ENCODE measurements at regions of chr17 and their contacts with region 1.

Region 1: GRCh38 chr17:41296846-41297245 is 5.8 kb downstream of the KRTAP29-1 start:
- DNase-seq: peak; percentile 23
- H3K4me3 Mint-ChIP-seq: no peak overlapping the region
- H3K27ac Mint-ChIP-seq: no peak overlapping the region
- H3K4me1 Mint-ChIP-seq: no peaks in the 10 kb centered on the region
- H3K27me3 Mint-ChIP-seq: peaks cover 2% of the 10 kb centered on the region

Region 2: GRCh38 chr17:41065829-41066624 is 230.8 kb before region 1 on chr17 and contains the start of gene KRTAP2-4:
- intact Hi-C with region 1: no loop called
- DNase-seq: no peak
- H3K4me3 Mint-ChIP-seq: no peak within 1 kb of the TSS
- H3K27ac Mint-ChIP-seq: no peak within 1 kb of the TSS
- H3K4me1 Mint-ChIP-seq: no peaks in the 10 kb centered on the region
- H3K27me3 Mint-ChIP-seq: peaks cover 7% of the 10 kb centered on the region
- total RNA-seq, gene KRTAP2-4: not detected in 2 replicates

Region 3: DNA sequence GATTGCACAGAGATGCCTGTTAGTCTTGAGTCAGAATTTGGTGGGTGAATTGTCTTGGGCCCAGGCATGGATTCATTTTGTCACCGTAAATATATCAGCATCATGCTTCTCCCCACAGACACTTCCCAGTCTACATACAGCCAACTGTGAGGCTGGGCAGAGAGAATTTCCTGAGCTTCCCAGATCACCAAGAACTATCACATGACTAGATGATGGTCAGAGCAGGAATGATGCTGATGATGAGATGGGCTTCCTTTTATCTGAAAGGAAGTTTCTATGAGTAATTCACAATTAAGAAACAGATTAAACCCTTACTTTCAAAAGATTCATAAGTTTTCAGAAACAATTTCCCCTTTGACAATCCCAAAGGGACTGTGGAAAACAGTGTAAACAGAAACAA is 42.0 kb before region 1 on chr17:
- intact Hi-C with region 1: loop called (anchors 5 kb)
- DNase-seq: peak; percentile 40
- H3K4me3 Mint-ChIP-seq: no peak overlapping the region
- H3K27ac Mint-ChIP-seq: no peak overlapping the region
- H3K4me1 Mint-ChIP-seq: no peaks in the 10 kb centered on the region
- H3K27me3 Mint-ChIP-seq: peaks cover 34% of the 10 kb centered on the region

Region 4: GRCh38 chr17:41338961-41339485 is 42.2 kb after region 1 on chr17:
- intact Hi-C with region 1: no loop called
- DNase-seq: peak; percentile 83
- H3K4me3 Mint-ChIP-seq: peak overlapping the region; percentile 47
- H3K27ac Mint-ChIP-seq: peak overlapping the region; percentile 54
- H3K4me1 Mint-ChIP-seq: peaks cover 42% of the 10 kb centered on the region
- H3K27me3 Mint-ChIP-seq: peaks cover 14% of the 10 kb centered on the region